ENCODE measurements at regions of chr16 and their contacts with region 1.

Region 1: GRCh38 chr16:28081391-28081968 is 18.0 kb upstream of the GSG1L start:
- DNase-seq: no peak
- ATAC-seq: no peak
- H3K4me3 Mint-ChIP-seq: no peak overlapping the region
- H3K27ac Mint-ChIP-seq: no peak overlapping the region
- H3K4me1 Mint-ChIP-seq: no peaks in the 10 kb centered on the region
- H3K27me3 Mint-ChIP-seq: no peaks in the 10 kb centered on the region

Region 2: DNA sequence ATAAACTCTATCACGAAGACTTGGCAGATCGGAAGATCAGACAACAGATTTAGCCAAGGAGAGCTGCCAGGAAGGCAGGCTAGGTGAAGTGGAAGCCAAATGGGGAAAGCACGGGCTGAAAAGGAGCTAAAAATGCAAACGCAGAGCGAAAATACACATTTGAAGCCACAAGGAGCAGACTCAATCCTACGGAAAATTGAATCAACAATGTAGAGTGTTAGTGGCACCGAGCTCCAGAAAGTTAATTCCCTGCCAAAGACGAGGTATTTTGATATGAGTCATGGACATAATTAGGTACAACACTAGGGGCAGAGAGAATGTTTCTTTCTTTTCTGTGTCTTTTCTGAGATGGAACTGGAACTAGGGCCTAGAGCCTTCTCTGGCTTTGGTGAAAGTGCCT is 38.7 kb before region 1 on chr16:
- CTCF ChIA-PET with region 1: no interaction called
- POLR2A ChIA-PET with region 1: no interaction called
- DNase-seq: no peak
- ATAC-seq: no peak
- H3K4me3 Mint-ChIP-seq: no peak overlapping the region
- H3K27ac Mint-ChIP-seq: no peak overlapping the region
- H3K4me1 Mint-ChIP-seq: no peaks in the 10 kb centered on the region
- H3K27me3 Mint-ChIP-seq: peaks cover 5% of the 10 kb centered on the region

Region 3: GRCh38 chr16:28069971-28070794 is 11.3 kb before region 1 on chr16:
- CTCF ChIA-PET with region 1: interaction called, 12 read pairs
- POLR2A ChIA-PET with region 1: no interaction called
- DNase-seq: no peak
- ATAC-seq: no peak
- H3K4me3 Mint-ChIP-seq: no peak overlapping the region
- H3K27ac Mint-ChIP-seq: no peak overlapping the region
- H3K4me1 Mint-ChIP-seq: no peaks in the 10 kb centered on the region
- H3K27me3 Mint-ChIP-seq: peaks cover 11% of the 10 kb centered on the region